Activated naive CD4-positive, alpha-beta T cell treated with anti-CD3 and anti-CD28 coated beads for 36 hours (primary cell): ENCODE measurements at regions of chr3 and their contacts with region 1.

Region 1: GRCh38 chr3:46065294-46065721 is 38.0 kb upstream of the XCR1 start:
- DNase-seq: peak; percentile 89
- H3K4me3 Mint-ChIP-seq: no peak overlapping the region
- H3K27ac Mint-ChIP-seq: no peak overlapping the region
- H3K4me1 Mint-ChIP-seq: peaks cover 67% of the 10 kb centered on the region
- H3K27me3 Mint-ChIP-seq: peaks cover 49% of the 10 kb centered on the region

Region 2: GRCh38 chr3:45528429-45528828 is 536.9 kb before region 1 on chr3:
- CTCF ChIA-PET with region 1: no interaction called
- intact Hi-C with region 1: no loop called
- DNase-seq: peak; percentile 67
- H3K4me3 Mint-ChIP-seq: no peak overlapping the region
- H3K27ac Mint-ChIP-seq: no peak overlapping the region
- H3K4me1 Mint-ChIP-seq: peaks cover 15% of the 10 kb centered on the region
- H3K27me3 Mint-ChIP-seq: no peaks in the 10 kb centered on the region

Region 3: GRCh38 chr3:45962033-45962432 is 103.3 kb before region 1 on chr3:
- CTCF ChIA-PET with region 1: no interaction called
- intact Hi-C with region 1: loop called (anchors 1 kb)
- DNase-seq: peak; percentile 75
- H3K4me3 Mint-ChIP-seq: no peak overlapping the region
- H3K27ac Mint-ChIP-seq: no peak overlapping the region
- H3K4me1 Mint-ChIP-seq: peaks cover 52% of the 10 kb centered on the region
- H3K27me3 Mint-ChIP-seq: no peaks in the 10 kb centered on the region

Region 4: GRCh38 chr3:46276502-46277099 is 211.3 kb after region 1 on chr3:
- CTCF ChIA-PET with region 1: no interaction called
- intact Hi-C with region 1: loop called (anchors 1 kb)
- DNase-seq: peak; percentile 87
- H3K4me3 Mint-ChIP-seq: no peak overlapping the region
- H3K27ac Mint-ChIP-seq: no peak overlapping the region
- H3K4me1 Mint-ChIP-seq: peaks cover 20% of the 10 kb centered on the region
- H3K27me3 Mint-ChIP-seq: peaks cover 14% of the 10 kb centered on the region